Left colon (tissue), 2 donors: ENCODE measurements at regions of chr5 and their contacts with region 1.

Region 1: GRCh38 chr5:134527146-134527960 is 1.9 kb downstream of the JADE2 start:
- DNase-seq: peak; percentile 78 to 85
- ATAC-seq: peak; percentile 53

Region 2: DNA sequence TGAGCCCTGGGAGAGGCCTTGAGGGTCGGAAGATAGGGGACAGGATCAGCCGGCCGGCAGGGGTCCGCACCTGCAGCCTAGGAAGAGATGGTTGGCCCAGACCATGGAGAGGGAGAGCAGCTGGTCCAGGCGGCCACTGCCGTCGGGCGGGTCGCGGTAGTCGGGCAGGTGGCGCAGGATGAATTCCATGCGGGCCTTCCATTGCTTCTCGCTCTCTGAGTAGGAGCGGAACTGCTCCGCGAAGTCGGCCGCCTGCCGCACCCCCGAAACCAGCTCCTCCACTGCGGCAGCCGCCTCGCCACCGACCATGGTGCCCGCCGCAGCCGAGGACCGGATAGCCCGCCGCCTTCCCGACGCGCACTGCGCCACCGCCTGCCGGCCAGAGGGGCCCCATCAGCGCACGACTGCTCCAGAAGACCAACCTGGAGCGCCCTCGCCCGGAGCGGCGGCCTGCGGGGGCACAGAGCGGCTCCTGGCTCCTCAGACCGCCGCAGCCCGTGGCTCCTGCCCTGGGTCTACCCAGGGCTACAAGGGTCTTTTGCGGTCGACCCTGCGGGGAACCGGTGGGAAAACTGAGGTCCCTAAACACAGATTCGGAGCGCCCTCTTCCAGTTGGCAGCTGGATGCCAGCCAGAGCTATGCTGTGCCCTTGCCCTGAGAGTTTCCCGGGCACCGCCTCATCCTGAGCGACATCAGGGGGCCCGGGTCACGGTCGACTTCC is 115.6 kb before region 1 on chr5 and contains the start of gene CDKN2AIPNL:
- intact Hi-C with region 1: loop called in 1 of 2 experiments (anchors 10 kb)
- DNase-seq: peak; percentile 92 to 95
- ATAC-seq: peak; percentile 92
- total RNA-seq, gene CDKN2AIPNL: 15.0 to 19.3 TPM

Region 3: GRCh38 chr5:134465816-134466240 is 61.5 kb before region 1 on chr5:
- intact Hi-C with region 1: loop called in 1 of 2 experiments (anchors 10 kb)
- DNase-seq: peak; percentile 89 to 91
- ATAC-seq: peak; percentile 89

Region 4: DNA sequence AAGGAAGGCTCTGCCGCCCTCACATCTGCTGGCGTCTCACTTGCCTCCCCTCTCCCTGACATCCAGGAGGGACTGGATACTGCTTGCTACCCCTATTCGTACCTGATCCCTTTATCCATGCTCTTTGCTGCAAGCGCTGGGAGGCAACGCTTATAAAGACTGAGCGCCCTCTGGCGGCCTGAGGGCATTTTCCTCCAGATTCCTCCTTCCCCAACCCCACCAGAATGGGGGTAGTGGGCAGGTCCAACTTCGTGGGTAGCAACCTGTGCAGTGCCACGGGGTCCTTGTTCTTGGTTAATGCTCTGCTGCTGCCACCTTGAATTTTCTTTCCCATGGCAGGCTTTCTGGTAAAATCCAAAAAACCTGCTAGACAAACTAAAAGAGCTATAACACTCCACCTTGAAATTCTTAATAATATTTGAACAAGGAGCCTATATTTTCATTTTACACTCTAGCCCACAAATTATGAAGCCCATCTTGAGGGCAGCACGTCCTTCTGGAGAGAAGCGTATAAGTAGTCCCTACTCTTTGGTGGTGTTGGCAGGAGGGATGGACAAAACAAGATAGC is 50.5 kb after region 1 on chr5:
- intact Hi-C with region 1: loop called in 1 of 2 experiments (anchors 5 kb)
- DNase-seq: peak; percentile 52 to 89
- ATAC-seq: peak; percentile 81

Region 5: GRCh38 chr5:134784241-134784920 is 257.0 kb after region 1 on chr5:
- intact Hi-C with region 1: no loop called
- DNase-seq: no peak
- ATAC-seq: peak; percentile 55